ENCODE measurements at regions of chr3 and their contacts with region 1.

Region 1: GRCh38 chr3:136075218-136075808 is 109.8 kb downstream of the PPP2R3A start:
- DNase-seq: peak; percentile 85
- H3K4me3 ChIP-seq: no peak overlapping the region
- H3K27ac ChIP-seq: peak overlapping the region; percentile 67
- H3K4me1 ChIP-seq: peaks cover 50% of the 10 kb centered on the region
- H3K27me3 ChIP-seq: no peaks in the 10 kb centered on the region

Region 2: DNA sequence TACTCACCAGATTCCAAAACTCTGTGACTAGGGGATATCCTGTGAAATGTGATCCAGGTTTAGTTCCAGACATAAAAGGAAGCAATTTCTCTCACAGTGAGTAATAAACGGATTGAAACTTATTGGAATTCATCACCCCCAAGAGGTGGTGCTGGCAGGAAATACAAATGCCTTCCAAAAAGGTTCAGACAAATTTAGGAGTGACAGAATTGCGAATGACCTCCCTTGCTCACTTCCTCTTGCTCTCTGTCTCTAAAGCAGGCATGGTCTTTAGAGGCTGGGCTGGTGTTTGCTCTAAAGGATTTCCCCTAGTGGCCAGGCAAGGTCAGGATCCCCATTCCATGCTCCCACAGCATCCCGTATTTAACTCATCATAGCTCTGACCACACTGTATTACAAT is 559.2 kb before region 1 on chr3:
- in situ Hi-C with region 1: no loop called
- DNase-seq: peak; percentile 31
- H3K4me3 ChIP-seq: no peak overlapping the region
- H3K27ac ChIP-seq: no peak overlapping the region
- H3K4me1 ChIP-seq: no peaks in the 10 kb centered on the region
- H3K27me3 ChIP-seq: no peaks in the 10 kb centered on the region; the same call in 1 of the 2 replicates

Region 3: GRCh38 chr3:136109499-136109898 is 34.2 kb after region 1 on chr3:
- in situ Hi-C with region 1: no loop called
- DNase-seq: no peak
- H3K4me3 ChIP-seq: no peak overlapping the region
- H3K27ac ChIP-seq: no peak overlapping the region
- H3K4me1 ChIP-seq: no peaks in the 10 kb centered on the region
- H3K27me3 ChIP-seq: no peaks in the 10 kb centered on the region

Region 4: DNA sequence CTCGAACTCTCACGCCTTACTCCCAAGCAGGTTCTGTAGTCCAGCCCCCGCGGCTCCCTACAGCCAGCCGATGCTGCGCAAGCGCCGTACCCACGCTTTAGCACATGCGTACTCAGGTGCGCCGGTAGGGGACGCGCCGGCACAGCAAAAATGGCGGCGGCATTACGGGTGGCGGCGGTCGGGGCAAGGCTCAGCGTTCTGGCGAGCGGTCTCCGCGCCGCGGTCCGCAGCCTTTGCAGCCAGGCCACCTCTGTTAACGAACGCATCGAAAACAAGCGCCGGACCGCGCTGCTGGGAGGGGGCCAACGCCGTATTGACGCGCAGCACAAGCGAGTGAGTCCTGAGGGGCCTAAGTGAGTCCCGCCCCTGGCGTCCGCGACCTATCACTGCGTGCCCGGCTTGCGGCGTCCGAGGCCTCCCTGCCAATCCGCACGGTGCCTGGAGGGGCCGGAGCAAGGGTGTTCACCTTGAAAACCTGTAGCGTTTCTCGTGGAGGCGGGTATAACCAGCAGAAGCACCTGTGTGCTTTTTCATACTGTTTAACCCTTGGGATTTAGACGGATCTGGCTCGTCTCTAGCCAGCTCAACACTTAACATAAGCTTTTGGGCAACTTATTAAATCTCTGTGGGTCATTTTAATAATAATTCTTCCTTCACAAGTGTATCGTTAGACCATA is 175.1 kb after region 1 on chr3 and contains the start of gene PCCB:
- in situ Hi-C with region 1: loop called (anchors 10 kb)
- DNase-seq: peak; percentile 98
- H3K4me3 ChIP-seq: peak within 1 kb of the TSS; percentile 74
- H3K27ac ChIP-seq: peak within 1 kb of the TSS; percentile 75
- H3K4me1 ChIP-seq: peaks cover 4% of the 10 kb centered on the region
- H3K27me3 ChIP-seq: no peaks in the 10 kb centered on the region
- total RNA-seq, gene PCCB: 38.9 and 50.2 TPM in 2 replicates

Region 5: DNA sequence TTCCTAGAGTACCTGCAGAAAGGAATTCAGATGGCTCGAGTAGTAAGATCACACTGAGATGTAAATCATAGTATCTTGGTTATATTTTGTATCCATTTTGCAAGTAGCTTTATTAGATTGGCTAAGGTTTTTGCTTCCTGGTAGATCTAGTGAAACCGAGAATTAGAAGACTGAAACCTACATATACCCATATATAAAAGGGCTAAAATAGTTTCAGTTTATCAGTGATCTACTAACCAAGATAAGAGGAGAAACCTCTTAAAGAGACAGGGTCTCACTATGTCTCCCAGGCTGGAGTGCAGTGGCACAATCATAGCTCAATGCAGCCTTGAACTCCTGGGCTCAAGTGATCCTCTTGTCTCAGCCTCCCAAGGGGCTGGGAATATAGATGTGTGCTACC is 310.1 kb after region 1 on chr3:
- in situ Hi-C with region 1: loop called (anchors 25 kb)
- DNase-seq: no peak
- H3K4me3 ChIP-seq: no peak overlapping the region
- H3K27ac ChIP-seq: no peak overlapping the region
- H3K4me1 ChIP-seq: 0 out of 2 replicates have a peak, but pooled peaks cover 10% of the 10 kb centered on the region
- H3K27me3 ChIP-seq: no peaks in the 10 kb centered on the region

Region 6: DNA sequence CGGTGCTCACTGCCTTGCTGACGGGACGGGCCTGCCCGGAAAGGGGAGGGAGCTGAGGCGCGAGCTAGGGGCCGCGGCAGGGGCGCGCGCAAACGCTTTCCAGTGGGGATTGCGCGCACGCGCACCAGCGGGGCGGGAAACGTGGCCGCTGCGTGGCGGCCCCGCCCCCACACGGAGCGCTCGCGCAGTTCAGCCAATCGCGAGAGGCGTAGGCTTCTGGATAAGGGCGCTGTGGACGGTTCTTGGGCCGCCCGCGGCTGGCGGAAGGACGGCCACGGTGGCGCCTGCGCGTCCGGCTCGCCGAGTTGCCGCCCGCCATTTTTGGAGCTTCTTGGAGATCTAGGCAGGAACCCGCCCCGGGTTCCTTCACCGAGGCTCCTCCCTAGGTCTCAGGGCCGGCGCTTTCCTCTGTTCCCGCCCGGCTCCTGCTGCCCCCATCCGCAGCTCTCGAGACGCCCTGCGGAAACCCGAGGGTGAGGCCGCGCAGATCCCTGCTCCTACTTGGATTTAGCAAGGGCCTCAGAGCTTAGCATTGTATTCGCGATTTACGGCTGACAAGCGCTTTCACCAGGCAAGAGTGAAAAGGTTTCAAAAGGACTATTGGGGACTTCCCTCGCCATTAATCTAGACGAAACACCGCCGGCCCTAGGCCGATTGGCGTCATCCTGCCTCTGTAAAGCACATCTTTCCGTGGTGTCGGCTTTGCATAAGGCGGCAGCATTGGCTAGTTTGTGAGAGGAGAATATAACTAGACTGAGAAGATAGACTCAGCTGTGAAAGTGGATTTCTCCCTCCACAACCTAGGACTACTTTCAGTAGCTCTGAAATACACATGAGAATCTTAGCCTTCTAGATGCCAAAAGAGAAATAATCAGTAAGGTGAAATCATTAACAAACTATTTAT is 677.4 kb after region 1 on chr3:
- in situ Hi-C with region 1: loop called (anchors 10 kb)
- DNase-seq: peak; percentile 99
- H3K4me3 ChIP-seq: peak overlapping the region; percentile 92
- H3K27ac ChIP-seq: peak overlapping the region; percentile 99
- H3K4me1 ChIP-seq: peaks cover 23% of the 10 kb centered on the region
- H3K27me3 ChIP-seq: no peaks in the 10 kb centered on the region

Region 7: GRCh38 chr3:137013955-137014688 is 938.8 kb after region 1 on chr3:
- in situ Hi-C with region 1: loop called (anchors 25 kb)
- DNase-seq: peak; percentile 91
- H3K4me3 ChIP-seq: peak overlapping the region; percentile 79
- H3K27ac ChIP-seq: peak overlapping the region; percentile 46
- H3K4me1 ChIP-seq: peaks cover 27% of the 10 kb centered on the region
- H3K27me3 ChIP-seq: no peaks in the 10 kb centered on the region

Measured in GM23248 (cell line).